Calu3 (cell line): ENCODE measurements at regions of chr20 and their contacts with region 1.

Region 1: GRCh38 chr20:2849529-2849928 is 9.0 kb downstream of the VPS16 start:
- DNase-seq: no peak
- H3K4me3 Mint-ChIP-seq: no peak overlapping the region
- H3K27ac Mint-ChIP-seq: no peak overlapping the region
- H3K4me1 Mint-ChIP-seq: no peaks in the 10 kb centered on the region
- H3K27me3 Mint-ChIP-seq: no peaks in the 10 kb centered on the region
- CTCF ChIP-seq: no peak

Region 2: DNA sequence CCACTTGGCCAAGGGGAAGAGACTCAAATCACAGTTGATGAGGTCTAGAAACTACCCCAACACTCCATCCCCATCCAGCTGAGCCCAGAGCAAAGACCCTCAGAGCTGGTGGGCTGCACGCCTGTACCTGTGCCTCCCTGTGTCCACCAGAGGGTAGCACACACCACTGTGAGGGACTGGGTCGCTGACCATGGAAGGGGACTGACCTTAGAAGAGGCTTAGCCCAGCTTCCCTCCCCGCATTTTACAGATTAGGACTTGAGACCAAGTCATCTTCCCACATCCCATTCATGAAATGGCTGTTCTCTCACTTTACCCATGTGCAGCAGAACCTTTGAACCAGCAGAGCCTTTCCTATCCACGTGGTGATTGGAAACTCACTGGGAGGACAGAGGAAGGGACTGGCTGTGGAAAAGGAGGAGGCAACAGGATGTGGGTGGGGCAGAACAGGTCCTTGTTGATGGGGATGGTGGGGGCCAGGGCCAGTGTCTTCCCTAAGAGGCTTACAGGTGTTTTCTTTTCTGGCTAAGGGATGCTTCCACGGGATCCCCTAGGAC is 93.4 kb before region 1 on chr20:
- CTCF ChIA-PET with region 1: interaction called, 7 read pairs
- intact Hi-C with region 1: loop called (anchors 1 kb)
- DNase-seq: peak; percentile 24
- H3K4me3 Mint-ChIP-seq: no peak overlapping the region
- H3K27ac Mint-ChIP-seq: no peak overlapping the region
- H3K4me1 Mint-ChIP-seq: no peaks in the 10 kb centered on the region
- H3K27me3 Mint-ChIP-seq: peaks cover 55% of the 10 kb centered on the region
- CTCF ChIP-seq: no peak

Region 3: GRCh38 chr20:2783908-2784566 is 65.5 kb before region 1 on chr20:
- CTCF ChIA-PET with region 1: no interaction called
- intact Hi-C with region 1: no loop called
- DNase-seq: no peak
- H3K4me3 Mint-ChIP-seq: no peak overlapping the region
- H3K27ac Mint-ChIP-seq: no peak overlapping the region
- H3K4me1 Mint-ChIP-seq: no peaks in the 10 kb centered on the region
- H3K27me3 Mint-ChIP-seq: peaks cover 46% of the 10 kb centered on the region
- CTCF ChIP-seq: no peak

Region 4: GRCh38 chr20:2838170-2838797 is 11.2 kb before region 1 on chr20:
- CTCF ChIA-PET with region 1: no interaction called
- intact Hi-C with region 1: no loop called
- DNase-seq: no peak
- H3K4me3 Mint-ChIP-seq: no peak overlapping the region
- H3K27ac Mint-ChIP-seq: no peak overlapping the region
- H3K4me1 Mint-ChIP-seq: peaks cover 8% of the 10 kb centered on the region
- H3K27me3 Mint-ChIP-seq: no peaks in the 10 kb centered on the region
- CTCF ChIP-seq: no peak